K562 (cell line): ENCODE measurements at regions of chrX and their contacts with region 1.

Region 1: DNA sequence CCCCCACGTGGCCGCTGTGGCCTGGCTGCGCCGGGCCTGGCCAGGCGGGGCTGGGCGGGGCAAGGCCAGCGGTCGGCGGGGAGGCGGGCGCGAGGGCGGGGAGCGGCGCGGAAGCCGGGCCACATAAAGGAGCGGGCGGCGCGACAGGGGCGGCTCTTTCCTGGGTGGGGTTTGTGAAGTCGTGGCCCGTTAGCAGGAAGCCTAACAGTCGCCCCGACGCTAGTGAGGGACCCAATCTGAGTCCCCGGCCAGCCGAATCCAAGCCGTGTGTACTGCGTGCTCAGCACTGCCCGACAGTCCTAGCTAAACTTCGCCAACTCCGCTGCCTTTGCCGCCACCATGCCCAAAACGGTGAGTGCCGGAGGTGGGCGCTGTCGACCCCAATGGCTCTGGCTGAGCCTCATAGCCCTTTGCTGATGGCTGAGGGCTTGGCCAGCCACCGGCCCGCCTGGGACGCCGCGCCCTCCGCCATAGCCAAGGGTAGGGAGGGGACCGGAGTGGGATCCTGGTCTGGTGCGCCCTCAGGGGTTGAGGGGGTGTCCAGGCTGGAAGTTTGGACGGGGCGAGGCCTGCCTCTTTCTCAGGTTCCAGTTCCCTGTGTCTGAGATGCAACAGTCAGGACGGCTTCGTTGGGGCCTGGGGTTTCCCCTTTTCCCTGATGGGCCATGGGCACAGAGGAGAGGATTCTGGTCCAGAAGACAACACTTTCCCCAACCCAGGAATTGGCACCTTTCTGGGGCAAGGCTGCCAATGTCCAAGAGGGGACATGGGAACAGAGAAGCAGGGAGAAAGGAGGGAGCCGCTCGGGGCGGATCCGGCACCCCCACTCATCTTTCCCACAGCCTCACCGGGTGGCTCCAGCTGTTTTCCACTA is at the start of gene MSN:
- DNase-seq: peak; percentile 78 to 84 (median 84)
- ATAC-seq: peak; percentile 92
- H3K4me3 ChIP-seq: peak within 1 kb of the TSS; percentile 90
- H3K27ac ChIP-seq: peak within 1 kb of the TSS; percentile 100
- H3K4me1 ChIP-seq: peaks cover 10 to 26% of the 10 kb centered on the region in 2 experiments; a peak in 4 of 5 replicates
- H3K27me3 ChIP-seq: no peaks in the 10 kb centered on the region
- CTCF ChIP-seq: 0 out of 6 replicates have a peak, but pooled peaks of 1 of the 3 experiments have one; percentile 5
- EP300 ChIP-seq: no peak
- POLR2A ChIP-seq: peak; percentile 82
- RAD21 ChIP-seq: peak; percentile 14 to 28; a peak in 1 of 4 replicates
- polyA plus RNA-seq, gene MSN: 128 to 283 TPM

Region 2: DNA sequence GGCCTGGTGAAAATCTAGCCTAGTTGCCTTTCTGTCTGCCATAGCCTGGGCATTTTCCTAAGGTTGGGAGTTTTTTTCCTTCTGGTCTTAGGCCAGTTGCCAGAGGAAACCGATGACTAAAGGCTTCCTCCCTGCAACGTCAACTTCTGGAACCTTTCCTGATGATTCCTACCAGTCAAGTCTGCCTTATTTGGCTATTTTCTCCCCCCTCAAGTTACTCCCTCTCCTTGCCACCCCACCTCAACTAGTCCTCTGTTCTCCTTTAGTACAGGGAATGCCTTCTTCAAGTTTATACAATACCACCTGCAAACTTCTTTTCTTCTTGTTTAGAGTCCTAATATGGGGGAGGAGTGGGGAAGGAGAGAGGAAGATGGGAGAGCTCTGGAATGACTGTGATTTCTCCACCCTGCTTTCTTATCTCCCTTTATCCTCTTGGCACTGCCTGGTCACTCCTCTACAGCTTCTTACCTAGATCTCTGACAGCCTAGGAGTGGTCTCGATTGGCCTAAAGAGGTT is 10.3 kb after region 1 on chrX:
- CTCF ChIA-PET with region 1: no interaction called
- POLR2A ChIA-PET with region 1: interaction called, 12 read pairs
- in situ Hi-C with region 1: no loop called
- intact Hi-C with region 1: no loop called
- DNase-seq: no peak
- ATAC-seq: no peak
- H3K4me3 ChIP-seq: no peak overlapping the region
- H3K27ac ChIP-seq: no peak overlapping the region; the same call in 2 of the 3 replicates
- H3K4me1 ChIP-seq: peaks cover 0 to 43% of the 10 kb centered on the region in 2 experiments; a peak in 4 of 5 replicates
- H3K27me3 ChIP-seq: no peaks in the 10 kb centered on the region
- CTCF ChIP-seq: no peak
- EP300 ChIP-seq: no peak
- POLR2A ChIP-seq: no peak
- RAD21 ChIP-seq: no peak